ENCODE measurements at regions of chr6 and their contacts with region 1.

Region 1: GRCh38 chr6:30013291-30013922 is 47.7 kb upstream of the POLR1H start:
- DNase-seq: no peak
- ATAC-seq: peak in 1 of 2 donors; percentile 61

Region 2: DNA sequence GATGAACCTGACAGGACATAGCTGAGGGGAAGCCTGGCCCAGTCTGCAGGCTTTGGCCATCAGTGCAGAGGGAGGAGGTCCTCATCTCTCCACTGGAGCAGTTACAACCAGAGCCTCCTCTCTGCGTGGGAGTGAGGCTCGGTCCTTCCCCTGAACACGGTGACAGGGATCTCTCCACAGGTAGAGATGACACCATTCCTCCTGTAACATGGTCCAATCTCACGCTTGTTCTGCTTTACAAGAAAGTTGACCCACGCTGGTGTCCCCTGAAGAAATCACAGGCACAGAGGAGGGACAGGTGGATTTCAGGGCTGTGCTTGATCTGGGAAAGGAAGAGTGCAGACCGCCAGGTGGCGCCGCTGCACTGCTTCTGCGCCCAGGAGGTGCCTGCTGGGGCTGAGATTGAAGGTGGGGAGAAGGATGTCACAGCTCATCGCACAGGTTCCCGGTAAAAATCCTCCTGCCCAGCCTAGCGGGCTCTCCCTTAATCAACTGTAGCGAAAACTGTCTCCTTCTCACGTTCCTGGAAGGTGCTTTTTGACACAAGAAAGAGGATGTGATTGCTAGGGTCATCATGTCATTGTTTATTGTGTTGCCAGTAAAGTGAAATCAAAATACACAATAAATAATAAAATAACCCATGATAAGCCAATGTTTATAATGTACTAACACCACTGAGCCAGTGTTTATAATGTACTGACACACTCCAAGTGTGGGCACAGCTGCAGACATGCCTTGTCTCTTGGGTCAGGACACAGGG is 165.4 kb before region 1 on chr6:
- intact Hi-C with region 1: loop called (anchors 1 to 5 kb)
- DNase-seq: peak; percentile 80
- ATAC-seq: peak; percentile 89 to 95

Region 3: GRCh38 chr6:30304002-30304401 is 290.6 kb after region 1 on chr6:
- intact Hi-C with region 1: no loop called
- DNase-seq: no peak
- ATAC-seq: no peak

Measured in left cardiac atrium (tissue), 4 donors.